ENCODE measurements at regions of chr9 and their contacts with region 1.

Region 1: DNA sequence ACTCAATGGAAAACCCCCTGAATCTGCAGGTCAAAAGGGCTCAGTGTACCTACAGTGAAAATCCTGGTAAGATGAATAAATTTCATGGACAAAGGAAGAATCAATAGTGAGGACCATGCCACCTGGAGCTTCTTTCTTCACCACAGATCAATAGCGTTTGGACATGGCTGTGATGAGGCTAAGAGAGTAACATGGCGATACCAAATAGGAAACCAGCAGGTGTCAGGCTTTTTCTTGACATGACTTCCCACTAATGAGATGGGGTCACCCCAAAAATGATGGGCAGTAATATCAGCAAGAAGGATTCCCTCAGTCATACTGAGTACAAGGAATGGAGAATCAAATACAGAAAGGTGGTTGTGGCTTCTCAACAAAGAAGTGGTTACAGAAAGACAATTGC is 208.5 kb upstream of the PLPPR1 start:
- DNase-seq: no peak
- ATAC-seq: no peak
- H3K4me3 ChIP-seq: no peak overlapping the region
- H3K27ac ChIP-seq: no peak overlapping the region
- H3K4me1 ChIP-seq: no peaks in the 10 kb centered on the region
- H3K27me3 ChIP-seq: no peaks in the 10 kb centered on the region
- CTCF ChIP-seq: no peak

Region 2: GRCh38 chr9:100848726-100849125 is 28.7 kb after region 1 on chr9:
- CTCF ChIA-PET with region 1: no interaction called
- POLR2A ChIA-PET with region 1: no interaction called
- in situ Hi-C with region 1: no loop called
- intact Hi-C with region 1: loop called (anchors 2 kb)
- DNase-seq: no peak
- ATAC-seq: no peak
- H3K4me3 ChIP-seq: no peak overlapping the region
- H3K27ac ChIP-seq: no peak overlapping the region
- H3K4me1 ChIP-seq: no peaks in the 10 kb centered on the region
- H3K27me3 ChIP-seq: no peaks in the 10 kb centered on the region
- CTCF ChIP-seq: no peak